CD4-positive, alpha-beta memory T cell (primary cell): ENCODE measurements at regions of chr22 and their contacts with region 1.

Region 1: DNA sequence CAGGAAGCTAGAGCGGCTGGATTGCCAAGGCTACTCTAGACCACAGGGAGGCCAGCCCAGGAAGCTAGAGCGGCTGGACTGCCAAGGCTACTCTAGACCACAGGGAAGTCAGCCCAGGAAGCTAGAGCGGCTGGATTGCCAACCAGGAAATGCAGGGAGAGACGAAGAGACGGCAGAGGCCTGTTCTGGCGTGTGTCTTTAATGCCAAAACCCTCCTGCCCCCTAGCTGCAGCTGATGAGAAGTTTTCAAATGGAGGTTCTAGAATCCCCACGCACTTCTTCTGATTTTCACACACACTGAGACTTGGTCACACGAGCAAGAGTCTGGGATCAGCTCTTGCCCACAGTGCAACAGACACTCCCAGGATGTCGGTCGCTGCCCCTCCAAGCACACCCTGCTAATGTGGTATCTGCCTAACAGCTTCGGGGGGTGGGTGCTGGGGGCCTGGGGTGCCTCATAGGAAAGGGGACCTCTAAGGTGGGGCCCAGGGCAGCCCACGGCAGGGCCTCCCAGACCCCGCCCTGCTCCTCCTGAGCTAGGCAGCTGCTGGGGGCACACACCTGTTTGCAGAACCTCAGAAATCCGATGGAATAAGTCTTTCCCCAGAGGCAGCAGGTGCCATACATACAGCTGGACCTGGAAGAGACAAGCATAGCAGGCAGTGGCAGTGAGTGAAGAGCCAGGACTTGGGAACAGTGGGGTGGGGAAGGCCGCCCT is 28.5 kb downstream of the MAFF start:
- DNase-seq: peak; percentile 49 to 68 (median 53)
- H3K4me3 ChIP-seq: no peak overlapping the region
- H3K4me3 Mint-ChIP-seq: peak overlapping the region in 3 of 8 donors; percentile 13 to 39 (median 33)
- H3K27ac ChIP-seq: no peak overlapping the region
- H3K27ac Mint-ChIP-seq: peak overlapping the region in 6 of 7 donors; percentile 2 to 83 (median 78)
- H3K4me1 ChIP-seq: no peaks in the 10 kb centered on the region
- H3K4me1 Mint-ChIP-seq: peaks cover 3 to 27% (median 14%) of the 10 kb centered on the region in 4 donors
- H3K27me3 ChIP-seq: no peaks in the 10 kb centered on the region
- H3K27me3 Mint-ChIP-seq: no peaks in the 10 kb centered on the region

Region 2: DNA sequence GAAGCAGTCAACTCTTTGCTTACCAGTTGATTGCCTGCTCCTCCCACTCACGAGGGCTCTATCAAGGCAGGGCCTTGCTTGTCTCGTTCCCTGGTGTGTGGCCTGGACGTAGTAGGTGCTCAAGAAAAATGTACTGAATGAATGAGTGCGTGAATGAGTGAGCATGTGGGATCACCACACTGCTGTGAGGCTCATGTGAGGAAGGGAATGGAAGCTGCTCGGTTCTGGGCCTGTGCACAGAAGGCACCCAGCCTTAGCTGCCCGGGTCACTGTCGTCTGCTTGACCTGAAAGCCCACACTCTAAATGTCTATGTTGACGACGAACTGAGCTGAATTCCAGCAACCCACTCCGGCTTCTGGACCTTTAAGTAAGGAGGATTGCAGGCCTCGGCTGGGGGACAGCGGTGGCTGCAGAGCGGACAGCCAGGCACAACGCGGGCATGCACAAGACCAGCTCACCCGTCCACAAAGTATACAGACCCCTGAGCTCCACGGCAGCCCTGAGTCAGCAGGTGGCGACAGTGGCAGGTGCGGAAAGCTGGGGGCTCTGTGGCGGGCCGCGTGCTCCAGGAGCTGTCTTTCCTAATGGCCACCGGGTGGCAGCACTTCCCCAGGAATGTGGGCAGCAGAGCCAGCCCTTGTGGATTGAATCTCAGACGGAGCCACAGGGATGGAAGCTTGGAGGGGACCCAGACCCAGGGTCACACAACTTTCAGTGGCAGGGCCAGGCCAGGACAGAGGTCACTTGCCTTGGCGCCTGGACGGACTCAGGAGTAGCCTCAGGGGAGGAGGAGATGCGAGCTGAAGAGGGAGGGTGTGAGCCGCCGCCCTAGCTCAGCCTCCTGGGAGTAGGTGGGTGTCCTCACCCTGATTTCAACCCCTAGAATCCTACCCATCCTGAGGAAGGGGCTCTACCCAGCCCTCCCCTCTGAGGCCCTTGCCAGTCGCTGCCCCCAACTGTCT is 178.1 kb before region 1 on chr22:
- CTCF ChIA-PET with region 1: interaction called, 23 read pairs
- POLR2A ChIA-PET with region 1: interaction called, 5 read pairs
- intact Hi-C with region 1: loop called (anchors 1 kb)
- DNase-seq: peak; percentile 68 to 73 (median 71)
- H3K4me3 ChIP-seq: no peak overlapping the region
- H3K4me3 Mint-ChIP-seq: no peak overlapping the region
- H3K27ac ChIP-seq: no peak overlapping the region
- H3K27ac Mint-ChIP-seq: peak overlapping the region in 4 of 7 donors; percentile 18 to 82 (median 64)
- H3K4me1 ChIP-seq: peaks cover 10% of the 10 kb centered on the region
- H3K4me1 Mint-ChIP-seq: peaks cover 3 to 18% (median 11%) of the 10 kb centered on the region in 4 donors
- H3K27me3 ChIP-seq: no peaks in the 10 kb centered on the region
- H3K27me3 Mint-ChIP-seq: peaks cover 0 to 3% of the 10 kb centered on the region in 2 donors

Region 3: DNA sequence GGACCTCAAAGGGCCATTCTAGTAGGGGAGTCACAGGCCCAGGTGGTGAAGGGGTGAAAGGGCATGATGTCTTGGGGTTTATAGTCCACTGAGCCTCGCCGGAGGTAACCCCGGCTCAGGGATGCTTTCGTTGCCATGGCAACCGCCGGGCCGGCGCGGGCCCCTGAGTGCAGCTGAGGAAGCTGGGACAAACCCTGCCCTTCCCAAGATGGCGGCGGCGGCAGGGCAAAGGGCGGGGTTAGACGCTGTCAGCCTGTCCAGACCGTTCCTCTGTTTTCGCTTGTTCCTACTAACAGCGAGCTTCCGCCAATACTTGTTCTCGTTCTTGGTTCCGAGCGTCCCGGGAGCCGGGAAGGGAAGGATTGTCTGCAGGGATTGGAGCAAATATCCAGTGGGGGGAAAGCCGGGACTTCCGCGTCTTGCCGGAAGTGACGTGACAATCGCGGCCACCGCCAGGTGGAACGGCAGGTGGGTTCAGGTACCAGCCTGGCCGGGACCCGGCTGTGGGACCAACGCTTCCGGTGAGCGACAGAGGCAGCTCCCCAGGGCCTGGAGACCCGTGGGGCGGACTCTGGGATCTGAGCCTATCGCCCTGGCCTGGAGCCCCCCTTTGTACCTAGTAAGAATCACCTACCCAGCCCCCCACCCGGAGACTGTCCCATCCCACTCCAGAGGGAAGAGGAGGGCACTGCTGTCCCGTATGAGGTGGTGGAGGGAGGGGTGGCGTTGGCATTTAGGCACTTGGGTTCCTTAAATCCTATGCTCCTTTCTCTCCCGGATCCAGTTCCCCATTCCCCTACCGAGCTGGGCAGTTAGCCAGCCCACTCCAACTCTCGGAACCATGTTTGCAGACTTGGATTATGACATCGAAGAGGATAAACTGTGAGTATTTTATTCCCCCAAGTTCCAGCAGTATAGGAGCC is 173.0 kb before region 1 on chr22 and contains the start of gene PICK1:
- CTCF ChIA-PET with region 1: interaction called, 23 read pairs
- POLR2A ChIA-PET with region 1: interaction called, 5 read pairs
- intact Hi-C with region 1: loop called (anchors 1 kb)
- DNase-seq: peak; percentile 83 to 86 (median 85)
- H3K4me3 ChIP-seq: peak within 1 kb of the TSS; percentile 95 to 97
- H3K4me3 Mint-ChIP-seq: peak within 1 kb of the TSS; percentile 94 to 98 (median 98)
- H3K27ac ChIP-seq: peak within 1 kb of the TSS; percentile 69
- H3K27ac Mint-ChIP-seq: peak within 1 kb of the TSS; percentile 96 to 100 (median 99)
- H3K4me1 ChIP-seq: peaks cover 16% of the 10 kb centered on the region
- H3K4me1 Mint-ChIP-seq: peaks cover 13 to 28% (median 21%) of the 10 kb centered on the region in 4 donors
- H3K27me3 ChIP-seq: no peaks in the 10 kb centered on the region
- H3K27me3 Mint-ChIP-seq: no peaks in the 10 kb centered on the region
- total RNA-seq, gene PICK1: 25.5 to 28.0 TPM

Region 4: DNA sequence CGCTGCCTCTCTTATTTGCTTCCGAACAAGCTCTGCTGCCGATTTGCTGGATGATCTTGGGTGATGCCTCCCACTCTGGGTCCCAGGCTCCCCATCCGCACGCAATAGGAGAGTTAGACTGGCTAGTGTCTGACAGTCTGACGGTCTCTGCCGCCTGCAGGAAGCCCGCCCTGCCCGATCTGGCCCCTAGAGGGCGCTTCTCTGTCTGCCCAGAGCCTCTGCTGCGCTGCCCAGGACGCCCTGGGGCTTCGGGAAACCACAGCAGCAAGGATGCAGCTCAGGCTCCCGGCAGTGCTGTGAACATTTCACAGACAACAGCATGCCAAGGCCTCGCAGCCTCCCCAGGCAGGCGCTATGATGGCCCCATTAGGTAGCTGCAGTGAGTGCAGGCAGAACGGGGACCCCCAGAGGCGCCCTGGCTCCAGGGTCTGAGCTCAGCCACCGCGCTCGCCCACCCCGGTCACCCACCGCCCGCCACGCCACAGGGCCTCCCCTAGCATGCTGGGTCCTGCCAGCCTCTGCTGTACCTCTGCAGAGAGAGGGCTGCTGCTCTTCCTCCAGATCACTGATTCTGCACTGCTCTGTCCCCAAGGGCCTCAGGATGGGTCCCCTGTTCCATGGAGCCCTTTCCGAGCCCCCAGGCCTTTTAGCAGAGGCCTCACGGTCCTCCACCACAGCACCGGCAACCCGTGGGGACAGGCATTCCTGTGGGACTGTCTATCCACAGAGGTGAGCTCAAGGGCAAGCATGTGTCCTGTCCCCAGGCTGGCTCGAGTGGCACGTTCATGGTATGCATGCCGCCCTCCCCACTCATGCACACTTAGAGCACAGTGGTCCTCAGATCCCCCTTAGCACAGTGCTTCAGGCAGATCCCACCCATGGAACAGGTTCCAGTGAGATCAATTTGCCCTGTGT is 115.5 kb before region 1 on chr22:
- CTCF ChIA-PET with region 1: interaction called, 22 read pairs
- POLR2A ChIA-PET with region 1: no interaction called
- intact Hi-C with region 1: loop called (anchors 1 kb)
- DNase-seq: peak; percentile 65 to 73 (median 70)
- H3K4me3 ChIP-seq: no peak overlapping the region
- H3K4me3 Mint-ChIP-seq: peak overlapping the region in 2 of 8 donors; percentile 57 to 74
- H3K27ac ChIP-seq: no peak overlapping the region
- H3K27ac Mint-ChIP-seq: peak overlapping the region in 4 of 7 donors; percentile 64 to 89 (median 83)
- H3K4me1 ChIP-seq: peaks cover 6% of the 10 kb centered on the region
- H3K4me1 Mint-ChIP-seq: peaks cover 2 to 5% (median 3%) of the 10 kb centered on the region in 4 donors
- H3K27me3 ChIP-seq: no peaks in the 10 kb centered on the region
- H3K27me3 Mint-ChIP-seq: no peaks in the 10 kb centered on the region

Region 5: DNA sequence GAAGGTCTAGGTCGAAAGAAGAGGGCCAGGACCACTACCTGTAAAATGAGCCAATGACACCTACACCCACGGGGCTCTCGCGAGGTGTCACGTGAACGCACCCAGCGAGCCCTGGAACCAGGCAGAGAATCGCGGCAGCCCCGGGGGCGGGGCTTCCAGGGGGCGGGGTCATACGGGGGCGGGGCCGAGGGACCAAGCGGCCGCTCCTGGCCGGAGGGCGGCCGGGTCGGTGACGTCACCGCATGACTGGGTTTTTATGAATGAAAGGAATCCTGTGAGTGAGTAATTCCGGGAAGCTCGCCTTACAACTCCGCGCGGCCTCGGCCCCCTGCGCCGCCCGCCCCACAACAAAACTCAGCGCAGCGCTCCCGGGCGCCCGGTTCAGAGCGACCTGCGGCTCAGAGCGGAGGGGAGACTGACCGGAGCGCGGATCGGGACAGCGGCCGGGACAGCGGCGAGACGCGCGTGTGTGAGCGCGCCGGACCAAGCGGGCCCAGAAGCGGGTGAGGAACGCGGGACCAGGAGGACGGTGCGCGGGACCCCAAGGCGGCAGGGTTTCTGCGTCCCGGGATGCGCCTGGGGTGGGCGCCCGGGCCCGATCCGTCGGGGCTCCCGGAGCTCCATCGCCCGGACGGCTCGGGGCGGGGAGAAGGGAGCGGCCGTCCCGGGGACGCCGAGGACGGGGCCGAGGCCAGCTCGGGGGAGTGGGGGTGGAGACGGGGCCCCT is 28.4 kb before region 1 on chr22 and contains the start of gene MAFF:
- CTCF ChIA-PET with region 1: no interaction called
- POLR2A ChIA-PET with region 1: interaction called, 17 read pairs
- intact Hi-C with region 1: no loop called
- DNase-seq: peak; percentile 77 to 93 (median 80)
- H3K4me3 ChIP-seq: peak within 1 kb of the TSS; percentile 80 to 90
- H3K4me3 Mint-ChIP-seq: peak within 1 kb of the TSS; percentile 87 to 93 (median 90)
- H3K27ac ChIP-seq: peak within 1 kb of the TSS; percentile 81
- H3K27ac Mint-ChIP-seq: peak within 1 kb of the TSS; percentile 90 to 98 (median 97)
- H3K4me1 ChIP-seq: peaks cover 32% of the 10 kb centered on the region
- H3K4me1 Mint-ChIP-seq: peaks cover 18 to 47% (median 26%) of the 10 kb centered on the region in 4 donors
- H3K27me3 ChIP-seq: no peaks in the 10 kb centered on the region
- H3K27me3 Mint-ChIP-seq: no peaks in the 10 kb centered on the region
- total RNA-seq, gene MAFF: 6.8 TPM

Region 6: DNA sequence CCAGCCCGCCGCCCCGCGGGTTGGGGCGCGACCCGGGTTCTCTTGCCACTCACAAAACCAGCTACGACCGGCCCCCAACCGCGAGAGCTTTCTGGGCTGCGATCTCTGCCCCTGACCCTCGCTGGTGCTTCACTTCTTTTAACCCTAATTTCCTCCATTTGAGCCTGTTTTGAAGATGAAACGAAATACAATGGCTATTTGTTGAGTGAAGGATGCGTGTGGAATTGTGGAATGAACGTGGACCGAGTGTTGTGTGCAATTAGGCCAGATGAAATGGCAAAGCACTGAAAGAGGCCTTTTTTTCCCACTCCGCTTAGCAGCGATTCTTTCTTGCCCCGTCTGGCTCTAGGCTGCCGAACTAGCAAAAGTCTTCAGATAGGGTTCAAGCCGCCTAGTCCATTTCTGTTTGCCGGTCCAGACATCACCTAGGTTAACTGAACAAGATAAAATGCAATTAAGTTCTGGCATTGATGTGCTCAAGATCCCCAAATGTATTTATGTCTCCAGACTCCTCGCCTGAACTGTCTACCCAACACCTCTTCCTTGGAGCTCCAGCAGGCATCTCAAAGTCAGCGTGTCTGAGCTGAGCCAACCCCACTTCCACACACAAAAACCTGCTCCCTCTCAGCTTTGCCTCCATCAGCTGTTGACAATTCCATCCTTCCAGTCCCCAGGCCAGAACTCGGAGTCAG is 43.0 kb after region 1 on chr22:
- CTCF ChIA-PET with region 1: no interaction called
- POLR2A ChIA-PET with region 1: no interaction called
- intact Hi-C with region 1: no loop called
- DNase-seq: no peak
- H3K4me3 ChIP-seq: peak overlapping the region; percentile 74 to 91
- H3K4me3 Mint-ChIP-seq: peak overlapping the region; percentile 88 to 95 (median 94)
- H3K27ac ChIP-seq: peak overlapping the region; percentile 90
- H3K27ac Mint-ChIP-seq: peak overlapping the region; percentile 95 to 98 (median 97)
- H3K4me1 ChIP-seq: peaks cover 40% of the 10 kb centered on the region
- H3K4me1 Mint-ChIP-seq: peaks cover 37 to 57% (median 47%) of the 10 kb centered on the region in 4 donors
- H3K27me3 ChIP-seq: no peaks in the 10 kb centered on the region
- H3K27me3 Mint-ChIP-seq: peaks cover 0 to 1% of the 10 kb centered on the region in 2 donors